CD8-positive, alpha-beta T cell (primary cell): ENCODE measurements at regions of chr3 and their contacts with region 1.

Region 1: GRCh38 chr3:42961633-42962032 is 17.5 kb upstream of the GASK1A start:
- DNase-seq: peak in 4 of 9 experiments; percentile 24 to 65 (median 42)
- ATAC-seq: no peak
- H3K4me3 ChIP-seq: no peak overlapping the region
- H3K4me3 Mint-ChIP-seq: no peak overlapping the region
- H3K27ac ChIP-seq: no peak overlapping the region
- H3K27ac Mint-ChIP-seq: no peak overlapping the region
- H3K4me1 ChIP-seq: peaks cover 20% of the 10 kb centered on the region
- H3K4me1 Mint-ChIP-seq: peaks cover 29% of the 10 kb centered on the region
- H3K27me3 ChIP-seq: no peaks in the 10 kb centered on the region
- H3K27me3 Mint-ChIP-seq: no peaks in the 10 kb centered on the region
- CTCF ChIP-seq: peak; percentile 53

Region 2: GRCh38 chr3:42979044-42979972 is 17.7 kb after region 1 on chr3 and contains the start of gene GASK1A:
- CTCF ChIA-PET with region 1: interaction called, 18 read pairs
- POLR2A ChIA-PET with region 1: no interaction called
- intact Hi-C with region 1: no loop called
- DNase-seq: peak in 5 of 9 experiments; percentile 15 to 58 (median 26)
- ATAC-seq: no peak
- H3K4me3 ChIP-seq: peak within 1 kb of the TSS; percentile 23 to 57
- H3K4me3 Mint-ChIP-seq: peak within 1 kb of the TSS; percentile 78
- H3K27ac ChIP-seq: no peak within 1 kb of the TSS
- H3K27ac Mint-ChIP-seq: no peak within 1 kb of the TSS
- H3K4me1 ChIP-seq: peaks cover 4% of the 10 kb centered on the region
- H3K4me1 Mint-ChIP-seq: peaks cover 9% of the 10 kb centered on the region
- H3K27me3 ChIP-seq: peaks cover 7 to 10% of the 10 kb centered on the region in 2 experiments
- H3K27me3 Mint-ChIP-seq: peaks cover 28% of the 10 kb centered on the region
- CTCF ChIP-seq: no peak
- total RNA-seq, gene GASK1A: 0.19 TPM in 1 of 2 experiments, not detected in the other

Region 3: DNA sequence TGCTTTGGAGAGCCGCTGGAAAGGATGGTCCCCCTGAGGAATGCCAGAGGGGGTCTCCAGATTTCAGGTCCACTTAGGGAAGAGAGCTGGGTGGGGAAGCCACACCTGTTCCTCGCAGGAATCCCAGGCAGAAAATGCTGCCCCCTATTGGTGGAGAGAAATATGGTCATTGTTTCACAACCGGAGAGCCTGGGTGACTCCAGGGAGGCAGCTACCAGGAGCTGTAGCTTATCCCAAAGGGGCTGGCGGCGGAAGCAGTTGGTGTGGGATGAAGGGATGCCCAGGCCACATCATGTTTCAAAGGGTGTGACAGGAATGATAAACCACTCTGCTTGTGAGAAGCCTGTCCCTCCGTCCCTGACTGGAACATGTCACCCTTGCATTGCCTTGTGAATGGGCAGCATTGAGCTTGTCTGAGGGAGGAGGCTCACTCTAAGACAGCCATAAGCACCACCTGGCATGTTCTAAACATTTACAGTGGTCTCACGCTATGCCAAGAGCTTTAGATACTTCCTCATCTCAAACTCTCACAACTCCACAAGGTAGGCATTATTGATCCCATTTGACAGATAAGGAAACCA is 109.8 kb after region 1 on chr3:
- CTCF ChIA-PET with region 1: interaction called, 84 read pairs
- POLR2A ChIA-PET with region 1: interaction called, 4 read pairs
- intact Hi-C with region 1: loop called (anchors 2 to 5 kb)
- DNase-seq: peak in 4 of 9 experiments; percentile 36 to 59 (median 53)
- ATAC-seq: no peak
- H3K4me3 ChIP-seq: no peak overlapping the region
- H3K4me3 Mint-ChIP-seq: no peak overlapping the region
- H3K27ac ChIP-seq: no peak overlapping the region
- H3K27ac Mint-ChIP-seq: no peak overlapping the region
- H3K4me1 ChIP-seq: no peaks in the 10 kb centered on the region
- H3K4me1 Mint-ChIP-seq: no peaks in the 10 kb centered on the region
- H3K27me3 ChIP-seq: no peaks in the 10 kb centered on the region
- H3K27me3 Mint-ChIP-seq: no peaks in the 10 kb centered on the region
- CTCF ChIP-seq: peak; percentile 60

Region 4: DNA sequence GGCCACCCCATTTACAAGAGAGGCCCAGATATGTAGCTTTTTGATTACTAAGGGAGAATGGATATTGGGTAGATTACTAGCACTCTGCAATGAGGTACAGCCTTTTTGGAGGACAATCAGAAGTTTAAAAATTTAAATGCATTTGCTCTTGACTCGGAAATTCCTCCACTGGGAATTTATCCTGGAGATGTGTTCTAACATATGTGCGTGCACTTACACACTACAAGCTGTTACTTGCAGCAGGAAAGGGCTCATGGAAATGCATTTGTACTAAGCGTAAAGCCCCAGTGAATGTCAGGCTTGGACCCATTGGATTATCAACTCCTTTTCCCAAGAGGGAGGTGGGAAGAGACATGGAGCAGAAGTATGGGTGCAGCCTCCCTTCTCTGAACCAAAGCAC is 152.0 kb after region 1 on chr3:
- CTCF ChIA-PET with region 1: interaction called, 10 read pairs
- POLR2A ChIA-PET with region 1: no interaction called
- intact Hi-C with region 1: no loop called
- DNase-seq: no peak
- ATAC-seq: no peak
- H3K4me3 ChIP-seq: no peak overlapping the region
- H3K4me3 Mint-ChIP-seq: no peak overlapping the region
- H3K27ac ChIP-seq: no peak overlapping the region
- H3K27ac Mint-ChIP-seq: no peak overlapping the region
- H3K4me1 ChIP-seq: no peaks in the 10 kb centered on the region
- H3K4me1 Mint-ChIP-seq: peaks cover 5% of the 10 kb centered on the region
- H3K27me3 ChIP-seq: no peaks in the 10 kb centered on the region
- H3K27me3 Mint-ChIP-seq: peaks cover 2% of the 10 kb centered on the region
- CTCF ChIP-seq: no peak

Region 5: GRCh38 chr3:43286115-43286840 is 324.6 kb after region 1 on chr3 and contains the start of gene SNRK:
- CTCF ChIA-PET with region 1: interaction called, 5 read pairs
- POLR2A ChIA-PET with region 1: no interaction called
- intact Hi-C with region 1: loop called in 1 of 2 experiments (anchors 5 kb)
- DNase-seq: peak; percentile 86 to 99 (median 93)
- ATAC-seq: peak; percentile 84
- H3K4me3 ChIP-seq: peak within 1 kb of the TSS; percentile 76 to 82
- H3K4me3 Mint-ChIP-seq: peak within 1 kb of the TSS; percentile 99
- H3K27ac ChIP-seq: peak within 1 kb of the TSS; percentile 87 to 91
- H3K27ac Mint-ChIP-seq: peak within 1 kb of the TSS; percentile 100
- H3K4me1 ChIP-seq: peaks cover 27% of the 10 kb centered on the region
- H3K4me1 Mint-ChIP-seq: peaks cover 31% of the 10 kb centered on the region
- H3K27me3 ChIP-seq: no peaks in the 10 kb centered on the region
- H3K27me3 Mint-ChIP-seq: no peaks in the 10 kb centered on the region
- CTCF ChIP-seq: peak; percentile 48
- total RNA-seq, gene SNRK: 280 to 281 TPM

Region 6: DNA sequence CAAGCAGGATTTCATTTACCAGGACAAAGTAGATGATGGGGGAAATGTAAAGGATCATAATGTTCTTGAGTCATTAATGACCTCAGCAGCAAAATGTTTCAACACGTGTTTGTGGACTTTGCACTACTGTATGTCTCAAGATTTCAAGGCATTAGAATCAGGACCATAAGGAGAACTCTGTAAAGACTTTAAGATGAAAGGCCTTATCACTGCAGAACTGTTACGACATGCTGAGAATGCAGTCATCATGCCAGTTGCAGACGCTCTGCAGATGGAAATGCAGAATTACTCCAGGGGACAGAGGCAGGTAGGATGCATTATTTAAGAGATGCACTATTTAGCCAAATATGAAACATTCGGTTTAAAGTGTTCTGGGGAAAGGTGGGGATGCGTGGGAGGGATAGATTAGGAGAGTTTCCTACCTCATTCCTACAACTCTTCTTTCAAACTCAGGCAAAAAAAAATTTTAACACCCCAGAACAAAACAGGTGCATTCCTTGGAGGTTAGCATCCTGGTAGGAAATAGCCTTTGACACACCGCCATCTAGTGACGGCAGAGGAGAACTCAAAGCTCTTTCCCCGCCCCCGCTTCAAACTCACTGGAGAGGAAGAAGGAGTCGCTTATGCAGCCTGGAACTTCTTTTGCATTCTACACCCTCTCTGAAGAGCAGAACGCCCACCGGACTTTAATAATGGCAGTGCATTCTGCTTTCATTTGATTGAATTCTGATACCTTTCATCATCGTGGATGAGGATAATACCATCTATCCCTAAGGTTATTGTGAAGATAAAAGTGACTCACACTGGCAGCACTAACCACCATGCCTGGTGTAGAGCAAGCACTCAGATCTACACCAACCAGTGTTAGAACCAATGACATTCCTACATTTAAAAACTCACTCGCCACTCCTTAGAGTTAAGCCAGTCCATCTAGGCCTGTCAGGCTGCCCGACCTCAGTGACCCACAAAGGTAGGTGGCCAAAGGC is 1236.9 kb after region 1 on chr3:
- CTCF ChIA-PET with region 1: interaction called, 3 read pairs
- POLR2A ChIA-PET with region 1: no interaction called
- intact Hi-C with region 1: loop called (anchors 1 to 10 kb)
- DNase-seq: peak; percentile 26 to 78 (median 65)
- ATAC-seq: peak; percentile 78
- H3K4me3 ChIP-seq: no peak overlapping the region
- H3K4me3 Mint-ChIP-seq: no peak overlapping the region
- H3K27ac ChIP-seq: no peak overlapping the region
- H3K27ac Mint-ChIP-seq: no peak overlapping the region
- H3K4me1 ChIP-seq: no peaks in the 10 kb centered on the region
- H3K4me1 Mint-ChIP-seq: peaks cover 4% of the 10 kb centered on the region
- H3K27me3 ChIP-seq: peaks cover 0 to 3% of the 10 kb centered on the region in 2 experiments
- H3K27me3 Mint-ChIP-seq: peaks cover 24% of the 10 kb centered on the region
- CTCF ChIP-seq: peak; percentile 76